Activated B cell treated with CpG ODN at 0.5 μM for 24 hours (primary cell): ENCODE measurements at regions of chr17 and their contacts with region 1.

Region 1: DNA sequence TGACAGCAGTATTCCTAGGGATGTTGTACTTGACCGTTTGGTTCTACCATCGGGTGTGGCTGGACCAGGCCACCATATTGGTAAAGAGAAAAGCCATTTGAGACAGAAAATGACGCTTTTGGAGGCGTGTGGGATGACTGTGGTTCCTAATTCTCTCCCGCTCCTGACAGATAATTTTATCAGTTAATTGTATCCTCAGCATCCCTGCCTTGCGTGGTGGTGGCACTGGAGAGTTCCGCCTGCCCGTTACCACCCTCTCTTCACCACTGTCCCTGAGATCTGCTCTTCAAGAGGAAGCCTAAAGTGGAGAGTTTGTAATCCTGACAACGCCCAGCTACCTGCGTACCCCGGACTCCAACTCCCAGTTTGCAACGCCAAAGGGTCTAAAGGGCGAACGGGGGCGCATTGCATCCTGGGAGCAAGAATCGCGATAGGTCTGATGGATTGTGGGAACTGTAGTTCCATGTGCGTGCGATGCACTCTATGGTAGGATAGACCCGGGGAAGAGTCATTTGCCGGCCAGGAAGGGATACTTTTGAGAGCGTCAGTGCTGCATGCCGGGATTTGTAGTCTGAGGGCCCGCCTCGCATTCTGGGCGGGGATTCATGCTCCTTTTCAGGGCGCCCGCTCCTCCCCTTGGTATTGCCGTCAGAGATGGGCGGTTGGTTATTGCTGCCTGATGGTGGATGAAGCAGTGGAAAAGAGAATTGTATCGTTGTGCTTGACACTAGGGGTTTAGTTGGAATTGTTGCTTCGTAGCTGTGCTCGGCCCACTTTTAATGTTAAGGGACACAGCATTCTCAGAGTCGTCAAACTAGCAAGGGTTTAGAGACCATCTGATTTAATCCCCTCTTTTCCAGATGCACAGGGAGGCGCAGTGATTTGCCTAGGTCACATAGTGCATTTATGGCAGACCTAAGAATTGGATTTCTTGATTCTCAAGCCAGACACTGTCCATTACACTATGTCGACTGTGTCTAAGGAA is 965 bp upstream of the PHF12 start:
- DNase-seq: peak; percentile 82
- ATAC-seq: peak; percentile 68
- H3K4me3 Mint-ChIP-seq: no peak overlapping the region
- H3K27ac Mint-ChIP-seq: no peak overlapping the region
- H3K4me1 Mint-ChIP-seq: peaks cover 17% of the 10 kb centered on the region
- H3K27me3 Mint-ChIP-seq: no peaks in the 10 kb centered on the region
- CTCF ChIP-seq: no peak

Region 2: DNA sequence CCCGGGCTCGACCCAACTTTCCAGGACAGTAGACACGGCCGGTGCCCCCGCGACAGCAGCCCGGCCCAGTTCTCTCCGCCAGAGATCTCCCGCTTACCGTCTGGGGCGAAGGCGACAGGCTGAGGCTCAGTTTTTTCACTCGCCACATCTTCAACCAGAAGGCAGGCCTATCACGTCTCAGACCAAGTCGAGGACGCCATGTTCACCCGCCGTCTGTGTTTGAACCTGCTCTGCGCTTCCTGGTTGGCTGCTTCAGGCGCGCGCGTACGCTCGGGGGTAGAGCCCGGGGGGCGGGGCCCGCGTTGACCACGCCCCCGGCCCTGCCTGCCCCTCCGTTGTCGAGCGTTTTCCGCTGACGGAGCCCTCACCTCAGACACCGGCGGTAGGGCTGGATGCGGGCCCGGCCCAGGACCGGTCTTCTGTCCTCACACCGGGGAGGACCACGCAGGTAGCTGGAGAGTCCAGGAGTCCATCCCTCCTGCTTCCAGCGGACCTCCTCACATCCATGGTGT is 353.4 kb before region 1 on chr17 and contains the start of gene SPAG5:
- CTCF ChIA-PET with region 1: no interaction called
- POLR2A ChIA-PET with region 1: interaction called, 9 read pairs
- intact Hi-C with region 1: loop called (anchors 5 kb)
- DNase-seq: peak; percentile 94
- ATAC-seq: peak; percentile 89
- H3K4me3 Mint-ChIP-seq: peak within 1 kb of the TSS; percentile 87
- H3K27ac Mint-ChIP-seq: peak within 1 kb of the TSS; percentile 96
- H3K4me1 Mint-ChIP-seq: peaks cover 24% of the 10 kb centered on the region
- H3K27me3 Mint-ChIP-seq: no peaks in the 10 kb centered on the region
- CTCF ChIP-seq: no peak
- total RNA-seq, gene SPAG5: 14.6 and 15.8 TPM in 2 replicates

Region 3: DNA sequence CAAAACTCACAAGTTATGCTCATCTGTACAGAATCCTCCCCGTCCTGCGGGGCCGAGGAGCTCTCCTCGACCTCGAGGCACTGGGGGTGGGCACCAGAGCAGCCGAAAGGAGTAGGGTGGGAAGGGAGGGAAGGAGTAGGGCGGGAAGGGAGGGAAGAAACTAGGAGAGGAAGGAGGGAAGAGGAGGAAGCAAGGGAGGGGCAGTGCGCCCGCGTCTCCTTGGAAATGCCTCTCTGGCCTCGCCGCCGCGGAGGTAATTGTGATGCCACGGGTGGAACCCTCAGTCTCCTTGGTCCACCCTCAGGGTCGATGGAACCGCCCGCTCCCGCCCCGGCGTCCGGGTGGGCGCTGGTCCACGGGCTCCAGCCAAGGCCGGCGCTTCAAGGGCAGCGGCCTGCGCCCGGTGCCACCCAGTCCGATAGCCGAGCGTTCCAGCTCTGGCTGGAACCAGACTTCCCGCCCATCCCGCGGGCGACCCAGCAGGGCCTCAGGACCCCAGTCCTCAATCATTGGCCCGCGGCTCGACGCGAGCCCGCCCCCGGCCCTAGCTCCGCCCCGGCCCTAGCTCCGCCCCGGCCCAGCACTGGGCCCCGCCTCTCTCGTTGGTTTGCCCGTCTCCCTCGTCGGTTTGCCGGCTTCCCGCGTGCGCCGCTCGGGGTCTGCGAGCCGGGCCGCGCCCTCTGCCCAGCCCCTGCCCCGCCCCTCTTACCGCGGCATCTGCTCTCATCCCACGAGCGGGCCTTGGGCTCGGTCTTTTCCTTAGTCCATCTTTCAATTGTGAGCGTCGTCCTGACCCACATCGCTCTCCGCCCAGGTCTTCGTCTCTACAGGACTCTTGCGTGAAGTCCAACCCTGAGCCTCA is 241.2 kb before region 1 on chr17:
- CTCF ChIA-PET with region 1: interaction called, 5 read pairs
- POLR2A ChIA-PET with region 1: interaction called, 12 read pairs
- intact Hi-C with region 1: no loop called
- DNase-seq: peak; percentile 94
- ATAC-seq: peak; percentile 89
- H3K4me3 Mint-ChIP-seq: peak overlapping the region; percentile 91
- H3K27ac Mint-ChIP-seq: peak overlapping the region; percentile 96
- H3K4me1 Mint-ChIP-seq: peaks cover 18% of the 10 kb centered on the region
- H3K27me3 Mint-ChIP-seq: no peaks in the 10 kb centered on the region
- CTCF ChIP-seq: no peak

Region 4: GRCh38 chr17:28750178-28751047 is 201.9 kb before region 1 on chr17:
- CTCF ChIA-PET with region 1: no interaction called
- POLR2A ChIA-PET with region 1: interaction called, 33 read pairs
- intact Hi-C with region 1: no loop called
- DNase-seq: peak; percentile 82
- ATAC-seq: peak; percentile 84
- H3K4me3 Mint-ChIP-seq: peak overlapping the region; percentile 75
- H3K27ac Mint-ChIP-seq: peak overlapping the region; percentile 74
- H3K4me1 Mint-ChIP-seq: peaks cover 51% of the 10 kb centered on the region
- H3K27me3 Mint-ChIP-seq: no peaks in the 10 kb centered on the region
- CTCF ChIP-seq: peak; percentile 95

Region 5: DNA sequence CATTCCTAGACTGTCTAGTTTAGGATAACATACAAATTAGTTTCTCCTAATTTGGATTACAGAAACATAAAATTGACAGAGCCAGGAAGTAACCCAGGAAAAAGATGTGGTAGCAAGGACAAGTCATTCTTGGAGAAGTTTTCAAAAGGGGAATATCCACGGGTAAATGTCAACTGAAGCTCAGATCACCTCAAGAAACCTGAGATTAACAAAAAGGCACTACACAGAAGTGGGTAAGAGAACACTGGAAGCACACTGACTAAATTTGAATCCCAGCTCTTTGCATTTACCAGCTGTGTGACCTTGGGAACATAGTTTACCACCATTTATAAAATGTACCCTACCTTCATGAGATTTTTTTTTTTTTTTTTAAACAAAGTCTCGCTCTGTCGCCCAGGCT is 169.1 kb before region 1 on chr17:
- CTCF ChIA-PET with region 1: no interaction called
- POLR2A ChIA-PET with region 1: no interaction called
- intact Hi-C with region 1: no loop called
- DNase-seq: no peak
- ATAC-seq: no peak
- H3K4me3 Mint-ChIP-seq: no peak overlapping the region
- H3K27ac Mint-ChIP-seq: no peak overlapping the region
- H3K4me1 Mint-ChIP-seq: peaks cover 17% of the 10 kb centered on the region
- H3K27me3 Mint-ChIP-seq: no peaks in the 10 kb centered on the region
- CTCF ChIP-seq: no peak

Region 6: DNA sequence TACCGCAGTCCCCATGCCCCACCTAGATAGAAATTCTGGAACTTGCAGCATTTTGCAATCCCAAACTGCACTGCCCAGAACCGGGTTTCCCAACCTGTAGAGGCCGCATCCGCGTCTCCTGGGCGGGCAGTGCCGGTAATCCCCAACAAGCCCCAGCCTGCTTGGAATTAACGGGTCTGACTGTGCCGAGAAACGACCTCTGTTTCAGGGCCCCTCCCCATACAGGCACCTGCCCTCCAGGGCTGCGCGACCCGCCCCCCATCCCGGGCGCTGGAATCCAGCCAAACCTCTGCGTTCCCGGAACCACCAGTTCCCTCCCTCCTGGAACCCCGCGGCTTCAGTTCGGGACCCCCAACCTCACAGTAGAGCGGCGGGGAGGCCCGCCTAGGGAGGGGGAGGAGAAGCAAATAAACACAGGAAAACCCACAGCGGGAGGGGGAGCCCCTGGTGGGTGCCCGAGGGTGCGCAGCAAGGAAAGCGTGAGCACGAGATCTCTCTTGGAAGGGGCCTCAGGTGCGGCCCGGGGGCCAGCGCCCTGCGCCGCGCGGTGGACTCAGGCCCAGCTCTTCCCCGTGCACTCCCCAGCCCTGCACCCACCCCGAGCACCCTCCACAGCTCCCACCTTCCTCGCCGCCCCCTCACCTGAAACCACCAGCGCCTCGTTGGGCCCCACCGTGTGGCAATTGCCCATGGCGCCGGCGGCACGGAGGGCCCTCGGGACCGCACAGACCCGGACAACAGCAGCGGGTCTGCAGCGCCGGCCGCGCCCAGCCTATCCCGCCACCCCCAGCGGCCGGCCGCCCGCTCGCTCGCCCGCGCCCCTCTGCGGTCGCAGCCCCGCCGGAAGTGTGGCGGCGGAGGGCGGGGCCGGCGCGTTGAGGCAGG is 55.2 kb before region 1 on chr17 and contains the start of gene FLOT2:
- CTCF ChIA-PET with region 1: interaction called, 3 read pairs
- POLR2A ChIA-PET with region 1: interaction called, 71 read pairs
- intact Hi-C with region 1: loop called (anchors 1 kb)
- DNase-seq: peak; percentile 66
- ATAC-seq: peak; percentile 58
- H3K4me3 Mint-ChIP-seq: peak within 1 kb of the TSS; percentile 96
- H3K27ac Mint-ChIP-seq: peak within 1 kb of the TSS; percentile 86
- H3K4me1 Mint-ChIP-seq: peaks cover 81% of the 10 kb centered on the region
- H3K27me3 Mint-ChIP-seq: no peaks in the 10 kb centered on the region
- CTCF ChIP-seq: no peak
- total RNA-seq, gene FLOT2: 303 and 321 TPM in 2 replicates

Region 7: GRCh38 chr17:28937044-28937729 is 15.1 kb before region 1 on chr17:
- CTCF ChIA-PET with region 1: interaction called, 3 read pairs
- POLR2A ChIA-PET with region 1: interaction called, 14 read pairs
- intact Hi-C with region 1: no loop called
- DNase-seq: no peak
- ATAC-seq: no peak
- H3K4me3 Mint-ChIP-seq: no peak overlapping the region
- H3K27ac Mint-ChIP-seq: no peak overlapping the region
- H3K4me1 Mint-ChIP-seq: peaks cover 71% of the 10 kb centered on the region
- H3K27me3 Mint-ChIP-seq: no peaks in the 10 kb centered on the region
- CTCF ChIP-seq: no peak

Region 8: DNA sequence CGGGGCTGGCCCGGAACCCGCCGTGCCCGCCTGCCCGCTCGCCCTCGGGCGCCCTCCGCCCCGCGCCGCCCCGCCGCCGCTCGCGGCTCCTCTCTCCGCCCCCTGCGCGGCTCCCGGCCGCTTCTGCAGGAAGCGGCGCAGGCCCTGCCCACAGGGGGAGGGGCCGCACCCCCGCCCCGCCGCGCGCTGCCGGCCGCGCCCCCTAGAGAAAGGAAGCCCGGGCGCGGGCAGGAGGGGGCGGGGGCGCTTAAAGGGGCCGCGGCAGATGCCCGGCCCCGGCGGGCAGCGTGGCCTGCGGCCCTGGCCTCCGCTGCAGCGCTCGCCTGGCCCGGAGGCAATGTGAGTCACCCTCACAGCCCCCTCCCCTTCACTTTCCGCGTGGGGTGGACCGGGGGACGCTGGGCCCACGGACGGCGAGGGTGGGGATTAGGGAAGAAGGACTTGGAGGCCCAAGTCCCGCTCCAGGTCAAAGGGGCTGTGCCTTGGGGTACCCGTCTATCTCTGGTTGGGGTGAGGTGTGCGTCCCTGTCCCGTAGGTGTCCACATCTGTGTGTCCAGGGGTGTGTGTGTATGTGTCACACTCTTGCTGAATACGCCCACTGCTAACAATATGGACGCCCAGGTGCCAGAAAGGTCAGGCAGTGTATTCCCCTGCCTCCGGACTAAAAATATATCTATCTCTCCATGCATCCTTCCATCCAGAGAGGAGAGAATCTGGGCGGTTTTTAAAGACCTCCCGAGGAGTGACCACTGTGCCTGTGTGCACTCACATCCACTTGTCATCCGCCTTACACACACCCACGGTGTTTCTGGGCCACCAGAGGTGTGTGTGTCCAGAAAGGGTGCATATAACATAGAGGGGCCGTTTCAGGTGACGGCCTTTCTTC is 637.5 kb after region 1 on chr17 and contains the start of gene GIT1:
- CTCF ChIA-PET with region 1: no interaction called
- POLR2A ChIA-PET with region 1: no interaction called
- intact Hi-C with region 1: loop called (anchors 10 kb)
- DNase-seq: peak; percentile 88
- ATAC-seq: peak; percentile 83
- H3K4me3 Mint-ChIP-seq: peak within 1 kb of the TSS; percentile 87
- H3K27ac Mint-ChIP-seq: peak within 1 kb of the TSS; percentile 83
- H3K4me1 Mint-ChIP-seq: peaks cover 73% of the 10 kb centered on the region
- H3K27me3 Mint-ChIP-seq: no peaks in the 10 kb centered on the region
- CTCF ChIP-seq: no peak
- total RNA-seq, gene GIT1: 41.7 and 45.3 TPM in 2 replicates